Panc1 (cell line): ENCODE measurements at regions of chr10 and their contacts with region 1.

Region 1: DNA sequence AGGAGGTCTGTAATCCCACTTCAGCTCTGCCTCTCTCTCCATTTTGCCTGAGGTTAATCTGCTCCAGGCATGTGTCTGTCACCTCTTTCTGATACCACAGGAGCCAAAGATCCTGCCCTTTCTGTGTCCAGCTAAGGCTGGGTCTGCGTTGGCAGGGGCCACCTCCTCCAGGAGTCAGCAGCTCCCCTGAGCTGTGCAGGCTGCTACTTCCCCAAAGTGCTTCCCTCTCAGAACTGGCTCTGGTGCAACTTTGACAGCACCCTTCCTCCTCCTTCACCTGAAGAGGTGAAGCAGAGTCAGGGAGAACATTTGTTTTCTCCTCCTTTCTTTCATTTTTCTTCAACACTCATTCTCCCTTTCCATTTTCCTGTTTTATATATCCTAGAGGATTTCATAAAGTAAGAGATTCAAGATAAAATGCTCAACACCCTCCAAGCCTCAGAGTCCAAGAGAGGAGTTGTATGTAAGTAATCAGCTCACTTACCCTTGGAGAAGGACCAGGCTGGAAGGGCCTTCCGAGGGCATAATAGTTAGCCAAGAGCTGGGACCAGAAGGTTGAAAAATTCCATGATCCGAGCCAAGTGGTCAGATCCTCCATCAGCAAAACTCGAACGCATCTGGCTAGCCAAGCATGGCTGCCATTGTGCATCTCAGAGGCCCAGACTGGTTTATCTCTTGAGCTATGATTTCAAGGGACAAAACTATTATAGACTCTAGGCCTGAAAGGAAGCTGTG is 257.3 kb downstream of the PTEN start:
- DNase-seq: no peak
- ATAC-seq: no peak
- H3K4me3 ChIP-seq: no peak overlapping the region
- H3K27ac ChIP-seq: no peak overlapping the region
- H3K4me1 ChIP-seq: no peaks in the 10 kb centered on the region
- H3K27me3 ChIP-seq: no peaks in the 10 kb centered on the region; the same call in 1 of the 2 replicates
- CTCF ChIP-seq: no peak

Region 2: GRCh38 chr10:87608756-87609155 is 512.0 kb before region 1 on chr10:
- CTCF ChIA-PET with region 1: no interaction called
- POLR2A ChIA-PET with region 1: no interaction called
- in situ Hi-C with region 1: no loop called
- intact Hi-C with region 1: no loop called
- DNase-seq: no peak
- ATAC-seq: no peak
- H3K4me3 ChIP-seq: no peak overlapping the region
- H3K27ac ChIP-seq: no peak overlapping the region
- H3K4me1 ChIP-seq: no peaks in the 10 kb centered on the region; the same call in 1 of the 2 replicates
- H3K27me3 ChIP-seq: no peaks in the 10 kb centered on the region
- CTCF ChIP-seq: no peak

Region 3: DNA sequence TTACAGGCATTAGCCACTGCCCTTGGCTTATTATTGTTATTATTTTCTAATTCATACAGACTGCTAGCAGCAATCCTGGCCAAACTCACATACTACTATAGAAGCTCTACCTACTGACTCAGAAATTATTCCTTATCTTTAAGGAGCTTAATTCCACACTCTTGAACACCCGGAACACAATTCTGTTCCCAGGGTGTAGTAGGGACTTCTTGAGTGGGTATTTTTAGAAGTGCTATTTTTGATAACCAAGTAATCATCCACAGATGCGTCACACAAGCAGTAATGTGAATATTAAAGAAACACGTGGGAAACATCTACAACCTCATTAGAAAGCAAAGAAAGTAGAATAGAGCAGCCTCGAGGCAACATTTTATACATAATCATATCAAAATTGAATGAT is 108.1 kb before region 1 on chr10:
- CTCF ChIA-PET with region 1: no interaction called
- POLR2A ChIA-PET with region 1: interaction called, 12 read pairs
- in situ Hi-C with region 1: no loop called
- intact Hi-C with region 1: no loop called
- DNase-seq: no peak
- ATAC-seq: no peak
- H3K4me3 ChIP-seq: no peak overlapping the region
- H3K27ac ChIP-seq: no peak overlapping the region
- H3K4me1 ChIP-seq: no peaks in the 10 kb centered on the region
- H3K27me3 ChIP-seq: no peaks in the 10 kb centered on the region
- CTCF ChIP-seq: no peak

Region 4: DNA sequence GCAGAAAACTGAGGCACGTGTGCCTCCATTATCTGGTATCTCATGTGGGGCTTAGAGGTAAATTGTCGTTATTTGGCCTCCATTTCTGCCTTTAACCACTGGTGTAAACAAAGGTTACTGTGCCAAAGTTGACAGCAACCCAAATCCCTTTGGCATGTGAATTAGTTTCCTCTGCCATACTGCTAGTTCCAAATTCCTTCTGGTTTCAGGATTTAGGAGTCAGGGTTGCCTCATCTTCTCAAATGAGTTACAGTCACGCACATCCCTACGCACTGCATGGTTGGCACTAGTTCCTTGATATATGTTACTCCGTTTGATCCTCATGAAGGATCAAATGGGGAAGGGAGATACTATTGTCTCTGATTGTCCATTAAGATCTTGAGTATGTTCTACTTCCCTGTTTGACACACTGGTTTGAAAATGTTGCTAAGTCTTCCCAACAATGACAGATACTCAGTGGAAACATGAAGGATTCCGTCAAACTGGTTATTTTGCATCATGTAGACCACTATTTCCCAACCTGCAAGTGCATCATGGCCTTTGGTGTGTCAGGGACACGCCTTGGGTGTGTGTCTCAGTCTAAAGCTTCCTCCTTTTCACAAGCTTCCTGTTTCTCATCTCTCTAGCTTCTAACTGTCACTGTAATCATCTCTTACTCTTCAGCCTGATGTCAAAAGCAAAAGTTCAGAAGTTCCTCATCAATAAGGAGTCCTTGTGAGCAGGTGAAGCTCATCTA is 638.8 kb after region 1 on chr10 and contains the start of gene LIPN:
- CTCF ChIA-PET with region 1: no interaction called
- POLR2A ChIA-PET with region 1: no interaction called
- in situ Hi-C with region 1: no loop called
- intact Hi-C with region 1: no loop called
- DNase-seq: no peak
- ATAC-seq: no peak
- H3K4me3 ChIP-seq: no peak within 1 kb of the TSS
- H3K27ac ChIP-seq: no peak within 1 kb of the TSS
- H3K4me1 ChIP-seq: no peaks in the 10 kb centered on the region
- H3K27me3 ChIP-seq: no peaks in the 10 kb centered on the region
- CTCF ChIP-seq: no peak
- total RNA-seq, gene LIPN: not detected